MCF 10A (cell line): ENCODE measurements at regions of chrX and their contacts with region 1.

Region 1: GRCh38 chrX:65706041-65706828 is 38.8 kb downstream of the MSN start:
- DNase-seq: peak; percentile 90
- H3K4me3 Mint-ChIP-seq: no peak overlapping the region
- H3K27ac Mint-ChIP-seq: peak overlapping the region; percentile 82
- H3K4me1 Mint-ChIP-seq: peaks cover 36% of the 10 kb centered on the region
- H3K27me3 Mint-ChIP-seq: no peaks in the 10 kb centered on the region
- CTCF ChIP-seq: no peak

Region 2: DNA sequence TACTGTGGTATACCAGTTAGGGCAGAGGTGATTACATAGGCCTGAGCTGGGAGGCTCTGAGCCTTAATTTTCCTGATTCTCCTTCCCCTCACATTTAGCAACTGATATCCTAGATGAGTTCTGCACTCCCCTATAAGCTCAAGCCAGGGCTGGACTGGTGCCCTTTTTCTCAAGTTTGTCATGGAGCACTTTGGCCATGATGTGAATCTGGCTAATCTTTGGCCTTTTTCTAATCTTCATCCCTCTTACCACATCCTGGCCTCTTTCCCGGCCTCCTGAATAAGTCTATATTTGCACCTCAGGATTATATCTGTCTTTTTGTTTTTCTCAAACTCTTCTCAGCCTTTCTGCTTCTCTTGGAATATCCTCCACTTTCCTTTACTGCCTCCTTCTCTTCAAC is 160.8 kb before region 1 on chrX:
- CTCF ChIA-PET with region 1: no interaction called
- POLR2A ChIA-PET with region 1: no interaction called
- intact Hi-C with region 1: no loop called
- DNase-seq: no peak
- H3K4me3 Mint-ChIP-seq: no peak overlapping the region
- H3K27ac Mint-ChIP-seq: no peak overlapping the region
- H3K4me1 Mint-ChIP-seq: no peaks in the 10 kb centered on the region
- H3K27me3 Mint-ChIP-seq: no peaks in the 10 kb centered on the region
- CTCF ChIP-seq: no peak

Region 3: GRCh38 chrX:65677954-65678469 is 28.2 kb before region 1 on chrX:
- CTCF ChIA-PET with region 1: interaction called, 23 read pairs
- POLR2A ChIA-PET with region 1: interaction called, 4 read pairs
- intact Hi-C with region 1: no loop called
- DNase-seq: peak; percentile 87
- H3K4me3 Mint-ChIP-seq: peak overlapping the region; percentile 9
- H3K27ac Mint-ChIP-seq: peak overlapping the region; percentile 90
- H3K4me1 Mint-ChIP-seq: peaks cover 40% of the 10 kb centered on the region
- H3K27me3 Mint-ChIP-seq: no peaks in the 10 kb centered on the region
- CTCF ChIP-seq: no peak